Heart right ventricle (tissue), 16 donors: ENCODE measurements at regions of chr6 and their contacts with region 1.

Region 1: GRCh38 chr6:29737707-29738630 is 14.7 kb downstream of the HLA-F start:
- DNase-seq: peak; percentile 46 to 66
- ATAC-seq: peak; percentile 61 to 94 (median 90)
- H3K4me3 ChIP-seq: no peak overlapping the region
- H3K27ac ChIP-seq: peak overlapping the region in 1 of 10 donors; percentile 35
- H3K4me1 ChIP-seq: peaks cover 0 to 21% (median 10%) of the 10 kb centered on the region in 9 donors
- H3K27me3 ChIP-seq: no peaks in the 10 kb centered on the region
- CTCF ChIP-seq: peak; percentile 52 to 80 (median 73)

Region 2: GRCh38 chr6:29547573-29547972 is 190.4 kb before region 1 on chr6:
- intact Hi-C with region 1: no loop called
- DNase-seq: no peak
- ATAC-seq: no peak
- H3K4me3 ChIP-seq: no peak overlapping the region
- H3K27ac ChIP-seq: no peak overlapping the region
- H3K4me1 ChIP-seq: peaks cover 0 to 2% (median 0%) of the 10 kb centered on the region in 9 donors
- H3K27me3 ChIP-seq: peaks cover 0 to 49% (median 16%) of the 10 kb centered on the region in 7 donors
- CTCF ChIP-seq: no peak

Region 3: GRCh38 chr6:29752451-29753308 is 14.7 kb after region 1 on chr6:
- intact Hi-C with region 1: loop called in 1 of 10 experiments (anchors 1 kb)
- DNase-seq: peak; percentile 89 to 90
- ATAC-seq: peak; percentile 84 to 91 (median 86)
- H3K4me3 ChIP-seq: peak overlapping the region; percentile 37 to 82 (median 73)
- H3K27ac ChIP-seq: peak overlapping the region; percentile 75 to 98 (median 96)
- H3K4me1 ChIP-seq: peaks cover 9 to 36% (median 32%) of the 10 kb centered on the region in 9 donors
- H3K27me3 ChIP-seq: no peaks in the 10 kb centered on the region
- CTCF ChIP-seq: peak; percentile 87 to 99 (median 93)

Region 4: DNA sequence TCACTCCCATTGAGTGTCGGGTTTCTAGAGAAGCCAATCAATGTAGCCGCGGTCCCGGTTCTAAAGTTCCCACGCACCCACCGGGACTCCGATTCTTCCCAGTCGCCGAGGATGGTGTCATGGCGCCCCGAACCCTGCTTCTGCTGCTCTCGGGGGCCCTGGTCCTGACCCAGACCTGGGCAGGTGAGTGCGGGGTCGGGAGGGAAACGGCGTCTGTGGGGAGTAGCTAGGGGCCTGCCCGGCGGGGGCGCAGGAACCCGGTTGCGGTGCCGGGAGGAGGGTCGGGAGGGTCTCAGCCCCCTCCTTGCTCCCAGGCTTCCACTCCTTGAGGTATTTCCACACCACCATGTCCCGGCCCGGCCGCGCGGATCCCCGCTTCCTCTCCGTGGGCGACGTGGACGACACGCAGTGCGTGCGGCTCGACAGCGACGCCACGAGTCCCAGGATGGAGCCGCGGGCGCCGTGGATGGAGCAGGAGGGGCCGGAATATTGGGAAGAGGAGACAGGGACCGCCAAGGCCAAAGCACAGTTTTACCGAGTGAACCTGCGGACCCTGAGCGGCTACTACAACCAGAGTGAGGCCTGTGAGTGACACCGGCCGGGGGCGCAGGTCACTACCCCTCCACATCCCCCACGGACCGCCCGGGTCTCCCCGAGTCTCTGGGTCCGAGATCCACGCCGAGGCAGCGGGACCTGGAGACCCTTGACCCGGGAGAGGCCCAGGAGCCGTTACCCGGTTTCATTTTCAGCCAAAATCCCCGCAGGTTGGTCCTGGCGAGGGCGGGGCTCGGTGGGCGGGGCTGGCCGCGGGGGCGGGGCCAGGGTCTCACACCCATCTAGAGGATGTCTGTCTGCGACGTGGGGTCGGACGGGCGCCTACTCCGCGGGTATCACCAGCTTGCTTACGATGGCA is 54.4 kb after region 1 on chr6:
- intact Hi-C with region 1: loop called in 2 of 10 experiments (anchors 5 kb)
- DNase-seq: peak; percentile 70 to 74
- ATAC-seq: peak; percentile 91 to 98 (median 94)
- H3K4me3 ChIP-seq: peak overlapping the region; percentile 44 to 88 (median 66)
- H3K27ac ChIP-seq: peak overlapping the region in 5 of 10 donors; percentile 25 to 72 (median 51)
- H3K4me1 ChIP-seq: peaks cover 0 to 22% (median 7%) of the 10 kb centered on the region in 9 donors
- H3K27me3 ChIP-seq: peaks cover 0 to 44% (median 26%) of the 10 kb centered on the region in 7 donors
- CTCF ChIP-seq: peak in 8 of 9 donors; percentile 37 to 81 (median 62)

Region 5: DNA sequence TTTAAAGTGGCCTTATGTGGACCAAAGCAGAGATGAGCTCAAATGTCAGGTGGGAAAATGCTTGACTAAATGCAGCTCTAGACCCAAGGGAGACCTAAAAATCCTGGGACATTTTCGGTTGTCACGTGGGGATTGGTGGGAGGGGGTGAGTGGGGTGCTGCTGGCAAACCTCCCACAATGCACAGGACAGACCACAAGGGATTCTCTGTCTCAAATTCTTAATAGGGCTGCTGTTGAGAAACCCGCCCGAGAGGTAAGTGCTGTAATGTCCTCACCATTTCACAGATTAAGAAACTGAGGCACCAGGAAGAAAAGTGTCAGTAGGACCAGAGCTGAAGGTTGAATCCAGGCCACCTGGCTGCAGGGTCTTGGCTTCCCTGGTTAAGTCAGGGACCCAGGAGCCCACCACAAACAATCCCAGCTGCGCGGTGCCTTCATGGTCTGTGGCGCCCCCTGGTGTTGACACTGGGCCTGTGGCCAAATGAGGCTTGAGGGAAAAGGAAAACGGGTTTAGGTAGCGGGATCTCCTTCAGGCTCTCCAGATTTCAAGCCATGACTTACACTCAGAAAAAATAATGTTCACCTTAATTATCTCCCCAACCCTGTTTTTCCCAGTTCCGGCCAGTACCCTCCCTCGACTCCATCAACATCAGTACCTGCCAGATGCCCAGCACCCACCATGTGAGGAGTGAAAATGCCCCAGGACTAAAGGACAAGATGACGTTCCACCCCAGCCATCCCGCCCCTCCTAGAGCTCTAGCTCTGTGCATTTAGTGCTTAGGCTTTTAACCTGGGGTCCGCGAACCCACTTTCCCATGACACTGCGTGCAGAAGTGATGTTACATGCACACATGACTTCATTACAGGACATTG is 96.8 kb after region 1 on chr6:
- intact Hi-C with region 1: loop called in 6 of 10 experiments (anchors 1 to 10 kb)
- DNase-seq: peak in 1 of 2 donors; percentile 40
- ATAC-seq: peak in 5 of 8 donors; percentile 46 to 69 (median 52)
- H3K4me3 ChIP-seq: no peak overlapping the region
- H3K27ac ChIP-seq: no peak overlapping the region
- H3K4me1 ChIP-seq: no peaks in the 10 kb centered on the region
- H3K27me3 ChIP-seq: peaks cover 0 to 89% (median 59%) of the 10 kb centered on the region in 7 donors
- CTCF ChIP-seq: peak; percentile 73 to 96 (median 90)